Activated B cell treated with CpG ODN at 0.5 μM for 24 hours (primary cell): ENCODE measurements at regions of chr15 and their contacts with region 1.

Region 1: DNA sequence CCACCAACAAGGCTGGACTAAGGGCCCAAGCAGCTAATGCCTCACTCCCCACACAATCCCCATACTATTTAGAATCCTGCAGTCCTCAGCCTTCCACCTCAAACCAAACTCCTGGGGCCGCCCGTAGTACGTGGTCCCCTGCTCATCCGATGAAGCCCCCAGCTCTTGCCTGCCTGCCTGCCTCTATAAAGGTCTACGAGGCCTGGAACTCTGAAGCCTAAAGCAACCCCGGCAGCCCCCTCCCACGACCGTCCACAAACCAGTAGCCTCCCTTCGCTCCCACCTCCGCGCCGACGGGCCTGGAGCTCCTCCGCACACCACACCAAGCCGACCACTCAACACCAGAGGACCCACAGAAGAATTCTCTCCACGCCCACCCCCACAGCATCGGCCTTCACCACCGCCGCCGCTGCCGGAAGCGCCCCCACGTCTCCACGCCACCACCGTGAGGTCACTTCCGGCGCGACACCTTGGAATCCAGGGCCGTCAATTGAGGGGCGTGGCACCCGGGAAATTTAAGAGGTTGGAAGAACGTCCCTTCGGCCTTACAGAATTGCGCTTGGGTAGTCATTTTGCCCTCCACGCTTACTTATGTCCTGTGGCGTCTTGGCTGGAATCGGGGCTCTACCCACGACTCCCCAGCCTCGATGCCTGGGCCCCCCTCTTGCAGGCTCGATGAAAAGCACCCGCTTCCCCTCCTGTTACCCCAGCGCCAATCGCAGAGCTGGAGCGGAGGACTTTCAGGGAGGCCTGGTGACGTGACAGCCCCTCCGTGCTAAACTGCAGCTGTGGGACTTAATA is at the start of gene EDC3:
- DNase-seq: peak; percentile 80
- ATAC-seq: peak; percentile 93
- H3K4me3 Mint-ChIP-seq: peak within 1 kb of the TSS; percentile 99
- H3K27ac Mint-ChIP-seq: peak within 1 kb of the TSS; percentile 91
- H3K4me1 Mint-ChIP-seq: peaks cover 39% of the 10 kb centered on the region
- H3K27me3 Mint-ChIP-seq: no peaks in the 10 kb centered on the region
- CTCF ChIP-seq: no peak
- total RNA-seq, gene EDC3: 44.8 and 49.5 TPM in 2 replicates

Region 2: GRCh38 chr15:74723754-74724334 is 28.0 kb after region 1 on chr15:
- CTCF ChIA-PET with region 1: no interaction called
- POLR2A ChIA-PET with region 1: no interaction called
- intact Hi-C with region 1: loop called (anchors 2 kb)
- DNase-seq: no peak
- ATAC-seq: peak; percentile 41
- H3K4me3 Mint-ChIP-seq: no peak overlapping the region
- H3K27ac Mint-ChIP-seq: no peak overlapping the region
- H3K4me1 Mint-ChIP-seq: peaks cover 11% of the 10 kb centered on the region
- H3K27me3 Mint-ChIP-seq: peaks cover 39% of the 10 kb centered on the region
- CTCF ChIP-seq: no peak

Region 3: DNA sequence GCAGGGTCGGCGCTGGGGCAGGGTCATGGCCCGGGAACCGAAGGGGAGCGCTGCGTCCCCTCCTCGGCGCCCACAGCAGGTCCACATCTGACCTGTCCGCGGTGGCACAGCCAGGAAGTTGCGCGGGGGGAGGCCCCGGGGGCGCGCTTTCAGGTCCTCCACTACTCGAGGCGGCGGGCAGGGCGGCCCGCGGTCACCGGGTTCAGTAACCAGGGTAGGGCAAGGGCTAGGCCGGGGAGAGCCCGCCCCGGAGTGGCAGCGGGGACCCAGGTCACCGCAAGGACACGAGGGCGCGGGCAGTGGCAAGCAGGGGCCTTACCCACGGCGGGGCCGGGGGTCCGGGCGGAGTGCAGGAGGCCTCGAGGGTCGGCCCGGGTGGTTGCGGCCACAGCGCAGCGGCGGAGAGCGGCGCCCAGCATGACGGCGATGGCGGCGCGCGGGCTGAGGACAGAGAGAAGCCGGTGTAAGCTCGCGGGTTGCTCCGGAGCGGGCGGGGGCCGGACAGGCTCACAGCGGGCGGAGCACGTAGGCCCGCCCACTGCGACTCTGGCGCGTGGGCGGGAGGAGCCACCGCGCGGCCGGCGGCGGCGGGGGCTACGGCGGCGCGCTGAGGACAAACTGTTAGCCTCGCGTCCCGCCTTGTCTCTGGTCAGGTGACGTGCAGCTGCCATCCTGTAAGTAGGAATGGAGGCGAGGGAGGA is 241.9 kb after region 1 on chr15 and contains the start of gene COX5A:
- CTCF ChIA-PET with region 1: no interaction called
- POLR2A ChIA-PET with region 1: no interaction called
- intact Hi-C with region 1: loop called (anchors 5 kb)
- DNase-seq: peak; percentile 86
- ATAC-seq: peak; percentile 97
- H3K4me3 Mint-ChIP-seq: peak within 1 kb of the TSS; percentile 86
- H3K27ac Mint-ChIP-seq: peak within 1 kb of the TSS; percentile 90
- H3K4me1 Mint-ChIP-seq: peaks cover 34% of the 10 kb centered on the region
- H3K27me3 Mint-ChIP-seq: no peaks in the 10 kb centered on the region
- CTCF ChIP-seq: no peak
- total RNA-seq, gene COX5A: 150 and 159 TPM in 2 replicates